Endothelial cell of umbilical vein (primary cell): ENCODE measurements at regions of chr3 and their contacts with region 1.

Region 1: GRCh38 chr3:48548729-48549705 is 7.6 kb downstream of the PFKFB4 start:
- DNase-seq: peak; percentile 75
- H3K4me3 ChIP-seq: no peak overlapping the region
- H3K27ac ChIP-seq: no peak overlapping the region
- H3K4me1 ChIP-seq: no peaks in the 10 kb centered on the region
- H3K27me3 ChIP-seq: no peaks in the 10 kb centered on the region
- CTCF ChIP-seq: peak; percentile 94 to 97
- POLR2A ChIP-seq: no peak

Region 2: DNA sequence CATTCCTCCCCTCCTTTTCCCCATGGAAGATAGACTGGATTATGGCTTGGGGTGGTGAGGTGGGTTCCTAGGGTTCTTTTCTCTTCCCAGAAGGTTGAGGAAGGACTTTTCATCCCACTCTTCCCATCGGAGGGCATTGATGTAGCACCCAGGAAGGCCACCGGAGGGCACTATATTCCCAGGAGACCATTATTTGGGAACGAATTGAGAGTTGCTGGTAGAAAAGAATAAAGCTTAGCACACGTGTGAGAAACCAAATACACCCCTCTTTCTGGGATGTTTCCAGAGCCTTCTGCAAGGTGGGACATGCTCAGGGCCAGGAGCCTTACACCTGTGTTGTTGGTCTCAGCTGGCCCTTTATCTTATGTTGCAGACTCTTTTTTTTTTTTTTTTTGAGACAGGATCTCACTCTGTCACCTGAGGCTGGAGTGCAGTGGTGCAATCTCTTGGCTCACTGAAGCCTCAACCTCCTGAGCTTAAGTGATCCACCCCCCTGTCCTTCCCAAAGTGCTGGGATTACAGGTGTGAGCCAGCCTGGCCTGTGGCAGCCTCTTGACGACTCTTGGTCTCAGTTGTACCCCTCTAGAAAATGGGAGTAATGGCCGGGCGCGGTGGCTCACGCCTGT is 354.5 kb before region 1 on chr3:
- CTCF ChIA-PET with region 1: interaction called, 8 read pairs
- POLR2A ChIA-PET with region 1: no interaction called
- dilution Hi-C with region 1: no loop called
- intact Hi-C with region 1: loop called (anchors 10 kb)
- DNase-seq: peak; percentile 63
- H3K4me3 ChIP-seq: no peak overlapping the region
- H3K27ac ChIP-seq: no peak overlapping the region
- H3K4me1 ChIP-seq: no peaks in the 10 kb centered on the region
- H3K27me3 ChIP-seq: peaks cover 0 to 5% of the 10 kb centered on the region in 2 experiments
- CTCF ChIP-seq: peak; percentile 70 to 79
- POLR2A ChIP-seq: no peak

Region 3: GRCh38 chr3:48222616-48223513 is 326.2 kb before region 1 on chr3 and contains the start of gene CAMP:
- CTCF ChIA-PET with region 1: no interaction called
- POLR2A ChIA-PET with region 1: no interaction called
- dilution Hi-C with region 1: no loop called
- intact Hi-C with region 1: no loop called
- DNase-seq: no peak
- H3K4me3 ChIP-seq: no peak within 1 kb of the TSS
- H3K27ac ChIP-seq: no peak within 1 kb of the TSS
- H3K4me1 ChIP-seq: no peaks in the 10 kb centered on the region
- H3K27me3 ChIP-seq: peaks cover 0 to 8% of the 10 kb centered on the region in 2 experiments
- CTCF ChIP-seq: no peak
- POLR2A ChIP-seq: no peak
- total RNA-seq, gene CAMP: not detected in 2 replicates

Region 4: DNA sequence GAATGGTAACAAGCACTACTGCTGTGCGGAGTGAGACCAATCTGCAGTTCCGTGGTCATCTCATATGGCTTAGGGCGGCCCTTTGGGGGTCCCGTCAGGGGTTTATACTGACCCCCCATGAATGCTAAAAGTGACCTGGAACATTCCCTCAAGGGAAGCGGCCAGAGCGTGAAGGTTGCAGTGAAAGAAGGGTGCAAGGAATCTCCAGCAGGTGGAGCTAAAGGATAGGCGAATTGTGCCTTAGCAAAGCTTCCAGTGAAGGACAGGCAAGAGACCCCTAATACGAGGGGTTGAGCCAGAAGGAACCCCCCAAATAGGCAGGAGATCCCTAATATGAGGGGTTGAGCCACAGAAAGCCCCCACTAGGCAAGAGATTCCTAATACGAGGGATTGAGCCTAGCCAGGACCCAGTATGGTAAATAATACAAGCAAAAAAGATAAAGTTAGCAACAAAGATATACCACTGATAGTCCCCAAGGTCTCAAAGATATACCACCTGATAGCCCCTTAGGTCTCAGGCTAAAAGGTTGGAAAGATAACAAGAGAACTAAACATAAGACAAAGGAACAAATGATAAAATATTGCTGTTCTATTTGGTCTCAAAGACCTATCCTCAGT is 275.3 kb before region 1 on chr3:
- CTCF ChIA-PET with region 1: interaction called, 21 read pairs
- POLR2A ChIA-PET with region 1: no interaction called
- dilution Hi-C with region 1: no loop called
- intact Hi-C with region 1: loop called (anchors 1 kb)
- DNase-seq: peak; percentile 76
- H3K4me3 ChIP-seq: no peak overlapping the region
- H3K27ac ChIP-seq: no peak overlapping the region
- H3K4me1 ChIP-seq: no peaks in the 10 kb centered on the region
- H3K27me3 ChIP-seq: no peaks in the 10 kb centered on the region
- CTCF ChIP-seq: peak; percentile 64 to 73
- POLR2A ChIP-seq: no peak

Region 5: GRCh38 chr3:48446425-48447193 is 102.4 kb before region 1 on chr3 and contains the start of gene ATRIP:
- CTCF ChIA-PET with region 1: interaction called, 12 read pairs
- POLR2A ChIA-PET with region 1: no interaction called
- dilution Hi-C with region 1: no loop called
- intact Hi-C with region 1: loop called (anchors 2 kb)
- DNase-seq: peak; percentile 91
- H3K4me3 ChIP-seq: peak within 1 kb of the TSS; percentile 70 to 92 (median 73)
- H3K27ac ChIP-seq: peak within 1 kb of the TSS; percentile 65
- H3K4me1 ChIP-seq: peaks cover 15% of the 10 kb centered on the region
- H3K27me3 ChIP-seq: no peaks in the 10 kb centered on the region
- CTCF ChIP-seq: no peak
- POLR2A ChIP-seq: peak; percentile 98
- total RNA-seq, gene ATRIP: 12.6 and 14.7 TPM in 2 replicates

Region 6: DNA sequence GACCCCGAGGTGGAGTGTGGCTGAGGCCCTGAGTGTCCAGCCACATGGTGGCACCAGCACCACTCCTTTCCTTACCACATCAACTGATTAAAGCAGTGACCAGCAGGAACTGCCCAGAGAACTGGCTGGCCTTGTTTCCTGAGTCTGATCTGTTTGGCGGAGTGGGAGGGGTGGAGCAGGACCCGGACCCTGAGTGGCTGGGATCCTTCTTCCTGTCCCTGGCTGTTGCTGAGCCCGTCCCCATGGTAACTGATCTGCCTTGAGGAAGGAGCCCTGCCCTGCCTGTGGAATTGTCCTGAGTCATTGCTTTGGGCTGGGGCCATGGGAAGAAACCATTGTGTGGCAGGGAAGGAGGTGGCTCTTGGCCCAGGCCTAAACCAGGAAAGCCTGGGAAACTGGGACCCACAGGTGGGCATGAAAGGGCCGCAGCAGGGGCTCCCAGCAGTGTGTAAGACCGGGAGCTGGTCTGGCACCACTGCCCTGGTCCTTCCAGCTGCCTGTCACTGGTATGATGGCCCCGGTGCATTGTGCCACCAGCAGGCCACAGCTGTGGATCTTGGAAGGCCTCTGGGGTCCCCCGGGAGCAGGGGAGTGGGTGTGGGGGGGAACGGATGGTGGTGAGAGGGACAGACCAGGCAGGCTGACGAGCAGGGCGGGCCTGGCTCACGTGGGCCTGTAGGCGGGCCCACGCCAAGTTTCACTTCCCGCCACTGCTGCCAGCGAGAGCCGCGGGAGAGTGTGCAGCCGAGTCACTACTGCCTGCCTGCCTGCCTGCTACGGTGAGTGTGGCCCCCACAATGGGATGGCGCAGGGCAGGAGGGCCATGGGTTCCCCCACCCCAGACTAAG is 83.3 kb before region 1 on chr3:
- CTCF ChIA-PET with region 1: interaction called, 63 read pairs
- POLR2A ChIA-PET with region 1: no interaction called
- dilution Hi-C with region 1: no loop called
- intact Hi-C with region 1: loop called (anchors 1 kb)
- DNase-seq: peak; percentile 100
- H3K4me3 ChIP-seq: peak overlapping the region in 2 of 3 experiments; percentile 44 to 45
- H3K27ac ChIP-seq: peak overlapping the region; percentile 98
- H3K4me1 ChIP-seq: peaks cover 24% of the 10 kb centered on the region
- H3K27me3 ChIP-seq: no peaks in the 10 kb centered on the region
- CTCF ChIP-seq: peak; percentile 81 to 82
- POLR2A ChIP-seq: peak; percentile 92

Region 7: GRCh38 chr3:48507351-48508061 is 41.5 kb before region 1 on chr3:
- CTCF ChIA-PET with region 1: interaction called, 7 read pairs
- POLR2A ChIA-PET with region 1: no interaction called
- dilution Hi-C with region 1: no loop called
- intact Hi-C with region 1: loop called (anchors 2 kb)
- DNase-seq: peak; percentile 72
- H3K4me3 ChIP-seq: no peak overlapping the region
- H3K27ac ChIP-seq: no peak overlapping the region
- H3K4me1 ChIP-seq: peaks cover 21% of the 10 kb centered on the region
- H3K27me3 ChIP-seq: no peaks in the 10 kb centered on the region
- CTCF ChIP-seq: peak; percentile 41 to 74
- POLR2A ChIP-seq: no peak